ENCODE measurements at regions of chr21 and their contacts with region 1.

Region 1: DNA sequence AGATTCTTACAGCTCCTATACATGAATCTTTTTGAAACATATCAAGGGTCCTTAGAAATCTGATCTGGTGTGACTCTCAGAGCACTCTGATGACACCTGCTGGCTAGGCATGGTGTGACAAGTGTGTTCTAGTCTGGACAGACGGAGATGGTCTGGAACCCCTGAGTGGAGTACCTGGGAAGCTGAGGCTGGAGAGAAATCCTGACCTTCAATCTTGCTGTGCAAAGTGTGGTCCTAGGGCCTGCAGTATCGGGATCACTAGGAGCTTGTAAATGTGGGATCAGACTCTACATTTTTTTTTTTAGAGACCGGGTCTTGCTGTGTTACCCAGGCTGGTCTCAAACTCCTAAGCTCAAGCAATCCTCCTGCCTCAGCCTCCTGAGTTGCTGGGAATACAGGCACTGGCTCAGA is 78.6 kb upstream of the SOD1 start:
- DNase-seq: peak; percentile 21 to 92 (median 80)

Region 2: GRCh38 chr21:31198575-31198974 is 382.3 kb before region 1 on chr21:
- intact Hi-C with region 1: loop called (anchors 5 kb)
- DNase-seq: peak in 1 of 42 donors; percentile 61

Region 3: GRCh38 chr21:31354604-31355443 is 226.0 kb before region 1 on chr21:
- intact Hi-C with region 1: loop called (anchors 10 kb)
- DNase-seq: peak in 28 of 42 donors; percentile 14 to 81 (median 58)

Region 4: DNA sequence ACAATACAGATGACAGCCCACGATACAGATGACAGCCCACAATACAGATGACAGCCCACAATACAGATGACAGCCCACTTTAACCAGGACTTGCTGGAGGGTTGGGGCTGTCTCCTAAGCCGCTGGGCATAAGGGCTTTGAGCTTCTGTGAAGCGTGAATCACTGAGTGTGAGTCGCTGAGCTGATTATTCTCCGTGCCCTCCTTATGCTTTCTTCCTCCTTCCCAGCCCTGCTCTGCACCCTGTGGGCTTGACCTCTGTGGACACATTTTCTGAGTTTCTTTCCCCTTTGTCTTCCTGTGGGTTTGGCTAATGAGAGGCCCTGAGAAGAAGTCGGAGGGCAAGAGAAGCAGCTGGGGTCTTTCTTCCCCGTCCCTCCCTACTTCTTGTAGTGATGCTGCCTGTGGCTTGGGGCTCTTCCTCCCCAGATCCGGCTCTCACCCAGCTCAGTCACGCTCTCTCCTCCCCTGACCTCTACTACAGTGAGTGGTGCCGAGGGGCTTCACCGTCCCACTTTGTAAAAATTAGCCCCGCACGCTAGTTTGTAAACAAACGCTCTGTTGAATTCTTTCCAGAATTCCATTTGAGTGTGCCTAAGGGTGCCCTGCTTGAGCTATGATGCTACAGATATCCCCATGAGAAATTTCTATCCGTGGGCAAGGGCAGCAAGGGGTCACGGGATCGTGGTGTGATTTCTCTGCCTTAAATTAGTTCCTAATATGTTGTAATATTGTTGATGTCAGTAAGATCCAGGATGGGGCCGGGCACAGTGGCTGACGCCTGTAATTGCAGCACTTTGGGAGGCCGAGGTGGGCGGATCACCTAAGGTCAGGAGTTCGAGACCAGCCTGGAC is 32.2 kb after region 1 on chr21:
- intact Hi-C with region 1: no loop called
- DNase-seq: no peak